Activated naive CD4-positive, alpha-beta T cell treated with anti-CD3 and anti-CD28 coated beads for 36 hours (primary cell): ENCODE measurements at regions of chr6 and their contacts with region 1.

Region 1: GRCh38 chr6:29723262-29723665 is at the start of gene HLA-F:
- DNase-seq: peak; percentile 93
- H3K4me3 Mint-ChIP-seq: peak within 1 kb of the TSS; percentile 90
- H3K27ac Mint-ChIP-seq: peak within 1 kb of the TSS; percentile 97
- H3K4me1 Mint-ChIP-seq: peaks cover 55% of the 10 kb centered on the region
- H3K27me3 Mint-ChIP-seq: no peaks in the 10 kb centered on the region
- total RNA-seq, gene HLA-F: 282 to 310 TPM

Region 2: DNA sequence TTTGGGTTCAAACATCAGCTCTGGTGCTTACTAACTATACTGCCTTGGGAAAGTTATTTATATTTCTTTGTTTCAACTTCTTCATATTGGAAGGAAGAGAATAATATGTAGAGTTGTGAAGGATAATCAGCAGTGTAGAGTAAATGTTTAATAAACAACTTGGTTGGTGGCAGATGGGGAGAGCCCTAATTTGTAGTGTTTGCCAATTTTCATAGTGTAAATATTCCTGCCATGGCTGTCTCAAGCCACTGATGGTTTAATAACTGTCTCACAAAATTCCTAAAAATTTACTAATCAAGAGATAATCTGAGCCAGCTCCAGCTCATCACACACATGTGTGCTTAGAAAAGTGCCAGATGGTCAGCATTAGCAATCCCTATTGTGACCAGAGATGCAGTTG is 138.4 kb before region 1 on chr6 and contains the start of gene OR2H2:
- CTCF ChIA-PET with region 1: no interaction called
- intact Hi-C with region 1: no loop called
- DNase-seq: no peak
- H3K4me3 Mint-ChIP-seq: no peak within 1 kb of the TSS
- H3K27ac Mint-ChIP-seq: no peak within 1 kb of the TSS
- H3K4me1 Mint-ChIP-seq: no peaks in the 10 kb centered on the region
- H3K27me3 Mint-ChIP-seq: peaks cover 10% of the 10 kb centered on the region
- total RNA-seq, gene OR2H2: not detected

Region 3: GRCh38 chr6:29705389-29706231 is 17.7 kb before region 1 on chr6:
- CTCF ChIA-PET with region 1: interaction called, 14 read pairs
- intact Hi-C with region 1: loop called (anchors 1 kb)
- DNase-seq: no peak
- H3K4me3 Mint-ChIP-seq: no peak overlapping the region
- H3K27ac Mint-ChIP-seq: no peak overlapping the region
- H3K4me1 Mint-ChIP-seq: peaks cover 48% of the 10 kb centered on the region
- H3K27me3 Mint-ChIP-seq: peaks cover 12% of the 10 kb centered on the region

Region 4: DNA sequence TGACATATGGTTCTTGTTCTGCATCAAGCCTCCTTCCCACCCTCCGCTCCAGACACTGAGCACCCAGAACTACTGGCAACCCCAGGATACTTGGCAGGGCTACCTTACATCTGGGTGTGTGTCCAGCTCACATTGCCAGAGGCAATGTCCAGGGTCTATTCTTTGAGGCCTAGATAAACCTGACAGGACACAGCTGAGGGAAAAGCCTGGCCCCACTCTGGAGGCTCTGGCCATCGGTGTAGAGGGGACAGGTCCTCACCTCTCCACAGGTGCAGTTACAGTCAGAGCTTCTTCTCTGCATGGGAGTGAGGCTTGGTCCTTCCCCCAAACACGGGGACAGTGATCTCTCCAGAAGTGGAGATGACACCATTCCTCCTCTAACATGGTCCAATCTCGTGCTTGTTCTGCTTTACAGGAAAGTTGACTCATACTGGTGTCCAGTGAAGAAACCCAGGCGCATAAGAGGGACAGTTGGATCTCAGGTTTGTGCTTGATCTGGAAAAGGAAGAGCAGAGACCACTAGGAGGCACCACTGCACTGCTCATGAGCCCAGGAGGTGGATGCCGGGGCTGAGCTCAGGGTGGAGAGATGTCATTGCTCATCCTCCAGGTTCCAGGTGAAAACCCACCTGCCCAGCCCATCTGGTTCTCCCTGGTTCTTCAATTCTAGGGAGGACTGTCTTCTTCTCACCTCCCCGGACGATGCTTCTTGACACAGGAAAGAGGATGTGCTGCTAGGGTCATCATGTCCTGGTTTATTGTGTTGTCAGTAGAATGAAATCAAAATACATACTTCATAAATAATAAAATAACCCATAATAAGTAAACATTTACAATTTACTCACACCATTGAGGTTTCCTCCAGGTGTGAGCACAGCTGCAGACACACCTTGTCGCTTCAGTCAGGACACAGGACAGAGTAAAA is 14.7 kb after region 1 on chr6:
- CTCF ChIA-PET with region 1: interaction called, 13 read pairs
- intact Hi-C with region 1: no loop called
- DNase-seq: peak; percentile 85
- H3K4me3 Mint-ChIP-seq: no peak overlapping the region
- H3K27ac Mint-ChIP-seq: no peak overlapping the region
- H3K4me1 Mint-ChIP-seq: peaks cover 11% of the 10 kb centered on the region
- H3K27me3 Mint-ChIP-seq: no peaks in the 10 kb centered on the region

Region 5: DNA sequence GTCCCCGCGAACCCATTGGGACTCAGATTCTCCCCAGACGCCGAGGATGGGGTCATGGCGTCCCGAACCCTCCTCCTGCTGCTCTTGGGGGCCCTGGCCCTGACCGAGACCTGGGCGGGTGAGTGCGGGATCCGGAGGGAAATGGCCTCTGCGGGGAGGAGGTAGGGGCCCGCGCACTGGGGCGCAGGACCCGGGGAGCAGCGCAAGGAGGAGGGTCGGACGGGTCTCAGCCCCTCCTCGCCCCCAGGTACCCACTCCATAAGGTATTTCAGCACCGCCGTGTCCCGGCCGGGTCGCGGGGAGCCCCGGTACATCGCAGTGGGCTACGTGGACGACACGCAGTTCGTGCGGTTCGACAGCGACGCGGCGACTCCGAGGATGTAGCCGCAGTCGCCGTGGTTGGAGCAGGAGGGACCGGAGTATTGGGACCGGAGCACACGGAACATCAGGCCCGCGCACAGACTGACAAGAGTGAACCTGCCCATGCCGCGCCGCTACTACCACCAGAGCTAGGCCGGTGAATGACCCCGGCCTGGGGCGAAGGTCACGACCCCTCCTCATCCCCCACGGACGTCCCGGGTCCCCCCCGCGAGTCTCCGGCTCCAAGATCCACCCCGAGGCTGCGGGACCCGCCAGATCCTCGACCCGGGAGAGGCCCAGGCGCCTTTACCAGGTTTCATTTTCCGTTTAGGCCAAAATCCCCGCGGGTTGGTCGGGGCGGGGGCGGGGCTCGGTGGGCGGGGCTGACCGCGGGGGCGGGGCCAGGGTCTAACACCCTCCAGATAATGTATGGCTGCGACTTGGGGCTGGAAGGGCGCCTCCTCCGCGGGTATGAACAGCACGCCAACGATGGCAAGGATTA is 203.4 kb after region 1 on chr6:
- CTCF ChIA-PET with region 1: no interaction called
- intact Hi-C with region 1: loop called (anchors 5 kb)
- DNase-seq: peak; percentile 90
- H3K4me3 Mint-ChIP-seq: peak overlapping the region; percentile 96
- H3K27ac Mint-ChIP-seq: peak overlapping the region; percentile 94
- H3K4me1 Mint-ChIP-seq: peaks cover 31% of the 10 kb centered on the region
- H3K27me3 Mint-ChIP-seq: no peaks in the 10 kb centered on the region

Region 6: DNA sequence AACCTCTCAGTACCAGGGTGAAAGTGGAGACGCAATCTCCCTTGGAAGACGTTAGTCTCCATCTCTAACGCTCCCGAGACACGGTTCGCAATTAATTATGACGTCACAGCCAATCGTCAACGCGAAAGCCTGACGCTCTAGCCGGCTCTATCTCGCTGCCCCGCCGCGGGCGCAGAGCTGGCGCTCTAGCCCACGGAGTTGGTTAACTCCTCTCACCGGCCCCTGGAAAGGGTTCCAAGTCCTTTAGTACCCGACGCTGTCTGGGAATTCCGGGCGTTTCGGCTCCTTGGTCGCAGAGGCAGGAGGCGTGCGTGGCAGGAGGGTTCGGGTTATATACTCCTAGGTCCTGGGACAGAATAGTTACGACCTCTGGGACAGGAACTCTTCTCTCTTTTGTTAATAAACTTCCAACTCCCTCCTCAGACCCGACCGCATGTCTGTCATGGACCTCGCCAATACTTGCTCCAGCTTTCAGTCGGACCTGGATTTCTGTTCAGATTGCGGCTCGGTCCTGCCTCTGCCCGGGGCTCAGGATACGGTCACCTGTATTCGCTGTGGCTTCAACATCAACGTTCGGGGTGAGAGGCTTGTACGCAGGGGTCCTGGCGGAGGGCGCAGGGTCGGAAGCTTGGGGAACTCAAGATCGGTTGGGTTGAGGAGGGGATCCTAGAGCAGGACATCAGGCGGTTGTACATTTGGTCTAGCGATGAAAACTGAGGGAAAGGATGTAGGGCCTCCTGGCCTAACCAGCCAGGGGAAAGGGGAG is 338.0 kb after region 1 on chr6 and contains the start of gene POLR1H:
- CTCF ChIA-PET with region 1: no interaction called
- intact Hi-C with region 1: loop called (anchors 1 kb)
- DNase-seq: peak; percentile 94
- H3K4me3 Mint-ChIP-seq: peak within 1 kb of the TSS; percentile 98
- H3K27ac Mint-ChIP-seq: peak within 1 kb of the TSS; percentile 98
- H3K4me1 Mint-ChIP-seq: peaks cover 34% of the 10 kb centered on the region
- H3K27me3 Mint-ChIP-seq: no peaks in the 10 kb centered on the region
- total RNA-seq, gene POLR1H: 74.6 to 77.8 TPM